Activated naive CD4-positive, alpha-beta T cell treated with anti-CD3 and anti-CD28 coated beads for 36 hours (primary cell): ENCODE measurements at regions of chr1 and their contacts with region 1.

Region 1: GRCh38 chr1:182301467-182302198 is 90.0 kb downstream of the GLUL start:
- DNase-seq: peak; percentile 74
- H3K4me3 Mint-ChIP-seq: no peak overlapping the region
- H3K27ac Mint-ChIP-seq: peak overlapping the region; percentile 73
- H3K4me1 Mint-ChIP-seq: peaks cover 29% of the 10 kb centered on the region
- H3K27me3 Mint-ChIP-seq: no peaks in the 10 kb centered on the region

Region 2: DNA sequence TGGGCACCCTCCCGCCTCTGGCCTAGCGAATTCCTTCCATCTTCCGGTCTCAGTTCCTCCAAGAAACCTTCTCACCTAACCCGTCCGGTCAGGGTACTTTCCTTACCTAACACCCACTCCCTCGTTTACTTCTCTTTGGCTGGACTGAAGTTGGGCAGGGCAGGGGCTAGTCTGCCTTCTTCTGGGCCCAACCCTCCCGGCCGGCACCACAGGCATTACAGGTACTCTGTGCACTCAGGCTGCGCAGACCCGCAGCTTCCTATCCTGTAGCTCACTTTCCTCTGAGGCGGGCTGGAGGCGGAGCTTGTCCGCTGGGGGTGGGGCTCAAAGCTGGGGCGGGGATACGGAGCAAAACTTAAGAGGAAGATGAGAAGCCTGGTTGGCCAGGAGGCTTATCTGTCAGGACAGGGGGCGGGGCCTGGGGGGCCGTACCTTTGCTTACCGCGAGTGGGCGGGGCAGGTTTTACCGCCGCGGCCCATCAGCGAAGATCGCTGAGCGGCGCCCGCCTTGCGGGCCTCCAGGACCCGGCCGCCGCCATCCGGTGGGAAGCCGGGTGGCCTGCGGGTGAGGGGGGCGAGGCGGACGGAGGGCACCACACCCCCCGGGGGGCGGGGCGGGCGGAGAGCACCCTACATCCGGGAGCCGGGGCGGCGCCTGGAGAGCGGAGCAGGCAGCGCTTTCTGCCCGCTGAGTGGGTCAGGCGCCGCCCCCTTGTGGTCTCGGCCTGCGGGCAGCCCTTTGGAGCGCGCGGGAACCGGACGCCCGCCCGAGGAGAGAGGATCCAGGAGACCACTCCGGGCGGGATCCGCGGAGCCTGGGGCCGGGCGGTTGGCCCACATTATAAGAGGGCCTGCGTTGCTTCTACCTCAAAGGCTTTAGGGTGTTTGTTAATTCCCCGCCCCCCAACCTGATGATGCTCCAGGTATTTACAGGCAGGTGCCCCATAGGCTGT is 272.0 kb before region 1 on chr1:
- CTCF ChIA-PET with region 1: no interaction called
- intact Hi-C with region 1: loop called (anchors 5 kb)
- DNase-seq: peak; percentile 99
- H3K4me3 Mint-ChIP-seq: peak overlapping the region; percentile 95
- H3K27ac Mint-ChIP-seq: peak overlapping the region; percentile 95
- H3K4me1 Mint-ChIP-seq: peaks cover 9% of the 10 kb centered on the region
- H3K27me3 Mint-ChIP-seq: no peaks in the 10 kb centered on the region

Region 3: DNA sequence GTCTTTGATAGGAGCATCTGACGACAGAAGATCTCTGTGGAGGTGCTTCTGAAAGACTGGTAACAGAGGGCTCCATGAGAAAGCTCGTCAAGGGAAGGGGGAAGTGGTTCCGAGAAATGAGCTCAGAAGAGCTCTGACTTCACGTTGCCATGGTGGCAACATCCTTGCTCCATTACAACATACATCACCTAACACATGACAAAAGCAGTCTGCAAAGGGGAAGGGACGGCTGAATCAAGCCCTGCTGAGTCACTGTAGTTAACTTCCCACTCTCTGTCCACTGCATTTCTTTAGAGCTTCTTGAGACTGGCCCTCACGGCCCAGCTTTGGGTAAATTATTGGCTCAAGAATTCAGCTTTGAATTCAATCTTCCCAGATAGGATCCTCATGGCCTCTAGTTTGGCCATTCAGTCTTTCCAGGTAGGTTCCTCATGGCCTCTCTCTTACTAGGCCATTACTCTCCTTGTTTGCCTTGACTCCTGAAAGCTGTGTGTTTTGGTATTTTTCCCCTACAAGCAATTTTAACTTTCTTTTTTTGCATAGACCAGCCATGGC is 152.1 kb before region 1 on chr1:
- CTCF ChIA-PET with region 1: interaction called, 13 read pairs
- intact Hi-C with region 1: loop called (anchors 1 kb)
- DNase-seq: peak; percentile 60
- H3K4me3 Mint-ChIP-seq: no peak overlapping the region
- H3K27ac Mint-ChIP-seq: peak overlapping the region; percentile 25
- H3K4me1 Mint-ChIP-seq: peaks cover 26% of the 10 kb centered on the region
- H3K27me3 Mint-ChIP-seq: no peaks in the 10 kb centered on the region

Region 4: DNA sequence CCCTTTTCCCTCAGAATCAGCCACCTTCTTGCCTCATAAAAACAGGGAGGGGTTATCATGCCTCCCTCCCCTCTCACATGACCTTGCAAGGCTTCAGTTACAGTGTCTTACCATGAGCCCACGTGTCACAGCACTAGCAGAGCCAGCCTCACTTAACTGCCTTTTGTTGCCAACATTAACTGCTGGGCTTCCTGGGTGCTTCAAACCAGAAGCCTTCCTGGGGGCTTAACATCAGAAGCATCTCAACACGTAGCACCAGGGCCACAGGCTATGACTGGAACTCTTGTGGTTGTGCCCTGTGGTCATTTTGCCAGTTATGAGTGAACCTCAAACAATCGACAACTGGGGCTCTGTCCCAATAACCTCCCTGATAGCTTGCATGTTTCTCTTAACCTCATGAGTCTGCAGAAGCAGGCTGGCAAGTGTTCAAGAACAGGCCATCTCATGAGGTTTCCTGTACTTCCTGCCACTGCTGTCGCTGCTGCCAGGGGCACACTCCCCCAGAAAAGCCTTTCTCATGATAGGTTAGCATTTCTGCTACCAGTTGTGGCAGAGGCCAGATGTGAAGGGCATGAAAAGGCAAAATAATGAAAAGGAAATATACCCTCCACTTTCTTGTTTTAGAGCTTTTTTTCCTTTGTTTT is 42.3 kb before region 1 on chr1:
- CTCF ChIA-PET with region 1: no interaction called
- intact Hi-C with region 1: loop called (anchors 2 kb)
- DNase-seq: peak; percentile 76
- H3K4me3 Mint-ChIP-seq: no peak overlapping the region
- H3K27ac Mint-ChIP-seq: peak overlapping the region; percentile 73
- H3K4me1 Mint-ChIP-seq: peaks cover 28% of the 10 kb centered on the region
- H3K27me3 Mint-ChIP-seq: no peaks in the 10 kb centered on the region

Region 5: GRCh38 chr1:182397771-182398393 is 96.2 kb after region 1 on chr1:
- CTCF ChIA-PET with region 1: interaction called, 22 read pairs
- intact Hi-C with region 1: loop called (anchors 1 kb)
- DNase-seq: no peak
- H3K4me3 Mint-ChIP-seq: no peak overlapping the region
- H3K27ac Mint-ChIP-seq: no peak overlapping the region
- H3K4me1 Mint-ChIP-seq: no peaks in the 10 kb centered on the region
- H3K27me3 Mint-ChIP-seq: no peaks in the 10 kb centered on the region

Region 6: GRCh38 chr1:182604169-182605164 is 302.8 kb after region 1 on chr1 and contains the start of gene RGS16:
- CTCF ChIA-PET with region 1: no interaction called
- intact Hi-C with region 1: loop called (anchors 5 kb)
- DNase-seq: peak; percentile 97
- H3K4me3 Mint-ChIP-seq: no peak within 1 kb of the TSS
- H3K27ac Mint-ChIP-seq: no peak within 1 kb of the TSS
- H3K4me1 Mint-ChIP-seq: peaks cover 45% of the 10 kb centered on the region
- H3K27me3 Mint-ChIP-seq: no peaks in the 10 kb centered on the region
- total RNA-seq, gene RGS16: 35.3 to 37.3 TPM